H1 (cell line): ENCODE measurements at regions of chr7 and their contacts with region 1.

Region 1: GRCh38 chr7:65037740-65038678 is 31.5 kb upstream of the ERV3-1 start:
- DNase-seq: peak; percentile 61 to 81
- H3K4me3 ChIP-seq: peak overlapping the region; percentile 48 to 80 (median 55)
- H3K27ac ChIP-seq: peak overlapping the region; percentile 77; the same call in 1 of the 2 replicates
- H3K4me1 ChIP-seq: peaks cover 0 to 5% (median 2%) of the 10 kb centered on the region in 4 experiments; a peak in 2 of 7 replicates
- H3K27me3 ChIP-seq: no peaks in the 10 kb centered on the region
- CTCF ChIP-seq: no peak
- EP300 ChIP-seq: no peak
- POLR2A ChIP-seq: peak in 1 of 2 experiments; percentile 61; a peak in 2 of 3 replicates
- RAD21 ChIP-seq: no peak

Region 2: DNA sequence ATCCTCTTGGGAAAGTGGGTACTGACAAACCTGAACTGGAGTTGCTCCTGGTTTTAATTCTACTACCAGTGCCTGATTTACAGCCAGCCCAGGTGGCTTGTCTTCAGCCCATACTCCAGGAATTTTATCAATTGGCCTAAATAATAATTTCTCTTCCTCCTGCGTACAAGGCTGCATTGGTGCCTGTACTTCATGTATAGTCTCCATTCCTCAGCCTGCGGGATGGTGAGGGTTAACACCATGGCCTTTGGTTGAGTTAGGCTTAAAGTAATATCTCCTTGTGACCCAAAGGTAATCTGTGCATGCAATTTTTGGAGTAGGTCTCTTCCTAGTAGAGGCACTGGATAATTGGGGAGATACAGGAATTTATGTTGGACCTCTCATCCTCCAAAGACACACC is 41.7 kb before region 1 on chr7:
- CTCF ChIA-PET with region 1: no interaction called
- POLR2A ChIA-PET with region 1: no interaction called
- DNase-seq: no peak
- H3K4me3 ChIP-seq: no peak overlapping the region
- H3K27ac ChIP-seq: no peak overlapping the region
- H3K4me1 ChIP-seq: peaks cover 2 to 7% (median 4%) of the 10 kb centered on the region in 4 experiments; a peak in 5 of 7 replicates
- H3K27me3 ChIP-seq: no peaks in the 10 kb centered on the region
- CTCF ChIP-seq: no peak
- EP300 ChIP-seq: no peak
- POLR2A ChIP-seq: no peak
- RAD21 ChIP-seq: no peak

Region 3: DNA sequence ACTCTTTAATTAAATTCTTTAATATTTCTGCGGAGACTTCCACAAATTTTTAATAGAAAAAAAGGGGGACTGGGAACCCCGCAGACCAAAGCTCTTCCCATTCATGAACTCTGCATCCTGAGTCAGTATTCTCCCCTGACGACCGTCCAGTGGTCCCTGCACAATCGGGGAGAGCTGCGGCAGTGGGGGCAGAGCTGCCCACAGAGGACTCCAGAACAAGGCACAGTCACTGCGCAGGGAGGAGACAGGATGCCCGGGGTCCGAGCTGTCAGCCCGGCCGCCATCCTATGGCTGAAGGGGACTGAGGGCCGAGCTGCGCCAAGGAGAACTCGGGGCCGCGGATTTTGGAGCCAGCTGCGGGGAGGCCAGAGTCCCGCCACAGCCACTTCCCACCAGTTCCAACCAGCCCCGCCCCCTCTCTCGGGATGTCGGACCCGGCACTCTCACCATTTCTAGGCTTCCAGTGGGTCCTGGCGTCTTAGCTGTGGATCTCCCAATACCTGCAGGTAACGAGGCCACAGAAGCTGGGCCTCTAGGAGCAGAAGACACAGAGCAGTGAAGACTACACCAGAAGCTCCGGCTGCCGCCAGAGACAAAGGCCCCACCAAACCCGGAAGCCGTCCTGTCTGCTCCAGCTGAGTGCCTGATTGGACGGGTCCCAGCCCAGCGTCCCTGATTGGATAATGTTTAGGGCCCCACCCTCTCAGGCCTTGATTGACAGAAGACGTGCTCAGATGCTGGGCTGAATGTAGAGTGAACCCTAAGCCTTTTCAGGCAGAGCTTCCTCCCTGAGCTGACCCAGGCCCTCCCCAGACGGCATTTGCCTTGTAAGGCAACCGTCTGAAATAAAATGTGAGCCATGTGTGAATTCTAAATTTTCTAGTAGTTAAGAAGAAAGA is 31.7 kb before region 1 on chr7 and contains the start of gene ERV3-1:
- CTCF ChIA-PET with region 1: interaction called, 3 read pairs
- POLR2A ChIA-PET with region 1: interaction called, 14 read pairs
- DNase-seq: peak; percentile 88 to 93
- H3K4me3 ChIP-seq: peak within 1 kb of the TSS; percentile 81 to 95 (median 90)
- H3K27ac ChIP-seq: peak within 1 kb of the TSS; percentile 91
- H3K4me1 ChIP-seq: peaks cover 0 to 3% (median 1%) of the 10 kb centered on the region in 4 experiments; a peak in 3 of 7 replicates
- H3K27me3 ChIP-seq: no peaks in the 10 kb centered on the region
- CTCF ChIP-seq: no peak
- EP300 ChIP-seq: no peak
- POLR2A ChIP-seq: peak; percentile 95
- RAD21 ChIP-seq: no peak
- total RNA-seq, gene ERV3-1: 9.7 and 11.4 TPM in 2 replicates